Endothelial cell of umbilical vein (primary cell): ENCODE measurements at regions of chr22 and their contacts with region 1.

Region 1: DNA sequence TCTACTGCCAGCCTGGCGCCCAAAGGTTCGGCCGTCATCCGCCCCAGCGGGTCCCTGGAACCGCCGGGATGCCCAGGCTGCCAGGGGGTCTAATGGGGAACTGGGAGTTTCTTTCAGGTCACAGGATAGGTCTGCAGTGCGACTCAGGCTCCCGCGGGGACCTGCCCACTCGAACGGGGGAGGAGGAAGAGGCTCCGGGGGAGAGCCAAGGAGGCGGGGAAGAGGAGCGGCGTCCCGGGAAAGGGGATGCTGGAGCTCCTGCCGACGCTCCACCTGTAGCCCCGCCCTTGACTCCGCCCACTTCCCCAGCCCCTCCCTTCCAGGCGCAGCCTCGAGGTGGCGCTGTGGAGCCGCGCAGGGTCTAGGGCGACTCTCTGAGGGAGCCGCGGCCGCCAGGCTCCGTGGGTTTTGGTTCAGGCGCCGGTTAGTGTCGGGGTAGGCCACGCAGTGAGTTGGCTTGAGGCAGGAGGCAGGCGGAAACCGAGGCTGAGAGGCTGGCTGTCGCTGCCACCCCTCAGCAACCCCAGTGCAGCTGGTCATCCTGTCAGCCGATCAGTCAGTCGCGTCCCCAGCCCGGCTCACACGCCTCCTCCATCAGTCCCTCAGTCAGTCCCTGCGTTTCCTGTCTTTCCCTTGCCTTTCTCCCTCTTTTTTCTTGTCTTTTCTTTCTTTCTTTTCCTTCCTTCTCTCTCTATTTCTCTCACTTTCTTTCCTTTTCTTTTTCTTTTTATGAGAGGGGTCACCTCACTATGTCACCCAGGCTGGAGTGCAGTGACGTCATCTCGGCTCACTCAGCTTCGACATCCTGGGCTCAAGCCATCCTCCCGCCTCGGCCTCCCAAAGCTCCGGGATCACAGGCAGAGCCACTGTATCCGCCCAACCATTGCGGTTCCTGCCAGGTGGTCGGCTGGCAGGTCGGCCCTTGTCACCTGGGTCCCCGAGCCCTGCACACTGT is 26.4 kb downstream of the YWHAH start:
- DNase-seq: peak; percentile 80
- H3K4me3 ChIP-seq: peak overlapping the region in 2 of 3 experiments; percentile 9 to 31
- H3K27ac ChIP-seq: no peak overlapping the region
- H3K4me1 ChIP-seq: peaks cover 6% of the 10 kb centered on the region
- H3K27me3 ChIP-seq: no peaks in the 10 kb centered on the region
- CTCF ChIP-seq: peak; percentile 93 to 98
- POLR2A ChIP-seq: no peak

Region 2: GRCh38 chr22:31394326-31394725 is 576.4 kb before region 1 on chr22:
- CTCF ChIA-PET with region 1: no interaction called
- POLR2A ChIA-PET with region 1: no interaction called
- dilution Hi-C with region 1: no loop called
- intact Hi-C with region 1: no loop called
- DNase-seq: no peak
- H3K4me3 ChIP-seq: no peak overlapping the region
- H3K27ac ChIP-seq: no peak overlapping the region
- H3K4me1 ChIP-seq: peaks cover 5% of the 10 kb centered on the region
- H3K27me3 ChIP-seq: no peaks in the 10 kb centered on the region
- CTCF ChIP-seq: no peak
- POLR2A ChIP-seq: no peak

Region 3: DNA sequence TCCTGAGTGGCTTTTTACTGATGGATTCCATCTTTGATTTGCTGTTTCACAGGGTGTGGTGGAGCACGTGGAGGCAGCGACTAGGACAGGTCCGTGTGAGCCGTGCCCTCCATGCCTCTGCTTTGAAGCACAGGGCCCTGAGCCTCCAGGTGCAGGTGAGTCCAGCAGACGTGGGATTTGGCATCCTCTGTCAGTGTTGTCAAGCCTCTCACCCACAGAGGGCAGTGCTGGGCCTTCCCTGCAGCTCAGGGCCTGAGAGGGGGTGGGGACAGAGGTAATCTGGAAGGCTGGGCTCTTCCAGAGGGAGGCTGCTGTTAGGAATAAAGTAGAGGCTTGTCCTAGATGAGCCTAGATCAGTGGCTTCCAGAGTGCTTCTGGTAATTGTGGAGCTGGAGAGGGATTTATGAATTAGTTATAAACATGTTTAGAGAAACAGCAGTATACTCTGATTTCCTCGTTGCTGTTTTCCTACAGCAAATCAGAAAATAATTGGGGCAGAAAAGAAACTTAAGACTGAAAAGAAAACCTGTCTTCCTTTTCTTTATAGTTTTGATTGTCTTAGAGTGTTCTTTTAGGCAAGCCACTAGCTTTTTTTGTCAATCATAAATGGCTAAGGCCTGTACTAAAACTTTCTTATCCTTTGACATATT is 409.4 kb before region 1 on chr22:
- CTCF ChIA-PET with region 1: interaction called, 22 read pairs
- POLR2A ChIA-PET with region 1: no interaction called
- dilution Hi-C with region 1: no loop called
- intact Hi-C with region 1: loop called (anchors 1 kb)
- DNase-seq: peak; percentile 78
- H3K4me3 ChIP-seq: no peak overlapping the region
- H3K27ac ChIP-seq: no peak overlapping the region
- H3K4me1 ChIP-seq: peaks cover 2% of the 10 kb centered on the region
- H3K27me3 ChIP-seq: no peaks in the 10 kb centered on the region
- CTCF ChIP-seq: peak; percentile 80 to 91
- POLR2A ChIP-seq: no peak

Region 4: GRCh38 chr22:31676700-31677099 is 294.1 kb before region 1 on chr22:
- CTCF ChIA-PET with region 1: interaction called, 13 read pairs
- POLR2A ChIA-PET with region 1: no interaction called
- dilution Hi-C with region 1: no loop called
- intact Hi-C with region 1: no loop called
- DNase-seq: peak; percentile 93
- H3K4me3 ChIP-seq: peak overlapping the region; percentile 31 to 53 (median 34)
- H3K27ac ChIP-seq: peak overlapping the region; percentile 63
- H3K4me1 ChIP-seq: peaks cover 4% of the 10 kb centered on the region
- H3K27me3 ChIP-seq: no peaks in the 10 kb centered on the region
- CTCF ChIP-seq: no peak
- POLR2A ChIP-seq: peak; percentile 44

Region 5: GRCh38 chr22:31818481-31819392 is 152.0 kb before region 1 on chr22:
- CTCF ChIA-PET with region 1: interaction called, 11 read pairs
- POLR2A ChIA-PET with region 1: no interaction called
- dilution Hi-C with region 1: no loop called
- intact Hi-C with region 1: no loop called
- DNase-seq: no peak
- H3K4me3 ChIP-seq: no peak overlapping the region
- H3K27ac ChIP-seq: no peak overlapping the region
- H3K4me1 ChIP-seq: no peaks in the 10 kb centered on the region
- H3K27me3 ChIP-seq: no peaks in the 10 kb centered on the region
- CTCF ChIP-seq: no peak
- POLR2A ChIP-seq: no peak

Region 6: GRCh38 chr22:31872209-31872608 is 98.6 kb before region 1 on chr22:
- CTCF ChIA-PET with region 1: interaction called, 32 read pairs
- POLR2A ChIA-PET with region 1: no interaction called
- dilution Hi-C with region 1: no loop called
- intact Hi-C with region 1: no loop called
- DNase-seq: peak; percentile 31
- H3K4me3 ChIP-seq: no peak overlapping the region
- H3K27ac ChIP-seq: peak overlapping the region; percentile 90
- H3K4me1 ChIP-seq: peaks cover 22% of the 10 kb centered on the region
- H3K27me3 ChIP-seq: no peaks in the 10 kb centered on the region
- CTCF ChIP-seq: peak in 1 of 2 donors; percentile 11
- POLR2A ChIP-seq: no peak

Region 7: DNA sequence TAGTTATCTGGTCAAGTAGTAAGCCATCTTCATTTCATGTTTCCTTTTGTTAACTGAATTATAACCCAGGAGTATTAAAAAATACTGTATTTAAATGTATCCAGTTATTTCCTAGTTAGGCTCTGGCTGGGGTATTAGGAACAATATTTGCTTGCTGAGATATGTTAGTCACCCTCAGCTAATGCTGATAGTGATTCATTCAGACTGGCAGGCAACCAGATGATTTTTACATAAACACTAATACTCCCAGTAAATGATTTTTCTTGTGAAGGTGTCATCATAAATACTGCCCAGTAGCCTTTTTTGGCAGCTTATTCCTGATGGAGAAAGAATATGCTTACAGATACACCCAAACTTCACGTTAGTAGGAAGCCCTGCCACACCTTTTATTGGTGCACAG is 18.3 kb before region 1 on chr22:
- CTCF ChIA-PET with region 1: interaction called, 24 read pairs
- POLR2A ChIA-PET with region 1: no interaction called
- dilution Hi-C with region 1: no loop called
- intact Hi-C with region 1: no loop called
- DNase-seq: peak; percentile 89
- H3K4me3 ChIP-seq: no peak overlapping the region
- H3K27ac ChIP-seq: peak overlapping the region; percentile 74
- H3K4me1 ChIP-seq: peaks cover 45% of the 10 kb centered on the region
- H3K27me3 ChIP-seq: no peaks in the 10 kb centered on the region
- CTCF ChIP-seq: no peak
- POLR2A ChIP-seq: no peak